HEK293 (cell line): ENCODE measurements at regions of chr17 and their contacts with region 1.

Region 1: GRCh38 chr17:50213026-50214022 is 11.9 kb upstream of the COL1A1 start:
- H3K4me3 ChIP-seq: no peak overlapping the region
- H3K27ac ChIP-seq: no peak overlapping the region
- H3K4me1 ChIP-seq: peaks cover 6% of the 10 kb centered on the region; the same call in 1 of the 2 replicates
- CTCF ChIP-seq: peak; percentile 44; the same call in 1 of the 2 replicates

Region 2: GRCh38 chr17:49873466-49873865 is 339.9 kb before region 1 on chr17:
- CTCF ChIA-PET with region 1: interaction called, 10 read pairs
- POLR2A ChIA-PET with region 1: no interaction called
- H3K4me3 ChIP-seq: no peak overlapping the region
- H3K27ac ChIP-seq: no peak overlapping the region
- H3K4me1 ChIP-seq: no peaks in the 10 kb centered on the region
- CTCF ChIP-seq: no peak

Region 3: DNA sequence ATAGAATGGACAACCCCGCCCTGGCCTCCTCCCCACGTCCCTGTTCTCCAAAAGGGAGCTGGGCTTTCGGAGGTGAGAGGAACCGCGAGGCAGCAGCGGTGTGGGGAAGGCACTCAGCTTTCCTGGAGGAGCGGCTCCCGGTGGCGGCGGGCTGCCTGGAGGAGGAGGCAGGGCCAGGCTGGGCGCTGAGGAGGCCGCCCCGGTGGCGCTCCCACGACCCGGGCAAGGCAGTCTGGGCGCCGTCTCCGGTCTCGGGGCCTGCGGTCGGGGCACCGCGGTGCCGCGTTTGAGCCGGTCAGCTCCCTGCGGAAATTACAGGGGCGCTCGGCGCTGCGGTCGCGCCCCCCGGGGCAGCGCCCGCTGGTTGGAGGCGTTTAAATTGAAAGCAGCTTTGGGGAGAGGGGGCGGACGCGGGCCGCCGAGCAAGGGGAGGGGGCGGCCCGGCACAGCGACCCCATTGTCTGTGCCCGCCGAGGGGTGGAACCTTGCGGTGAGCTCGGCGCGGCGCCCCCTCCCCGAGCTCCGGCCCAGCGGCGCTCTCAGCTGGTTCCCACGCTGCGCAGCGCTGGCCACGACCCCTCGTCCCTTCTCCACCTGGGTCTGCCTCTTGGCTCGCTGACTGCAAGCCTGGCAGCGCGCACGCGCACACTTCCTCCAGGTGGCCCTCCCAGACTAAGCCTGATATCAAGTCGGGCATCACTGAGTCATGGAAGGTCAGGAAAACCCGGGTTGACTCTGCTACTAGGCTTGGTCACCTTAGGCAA is 303.0 kb before region 1 on chr17:
- CTCF ChIA-PET with region 1: no interaction called
- POLR2A ChIA-PET with region 1: no interaction called
- H3K4me3 ChIP-seq: no peak overlapping the region
- H3K27ac ChIP-seq: no peak overlapping the region
- H3K4me1 ChIP-seq: no peaks in the 10 kb centered on the region
- CTCF ChIP-seq: no peak